Activated T-helper 1 cell treated with anti-CD3 and anti-CD28 coated beads, Interleukin-12 subunit alpha, Interleukin-12 subunit beta, Interleukin-2, Interleukin-4 antibody, amounts not matched to agents 30 ng/mL and 10 ng/mL and 1 ng/mL, durations not matched to agents 14 hours and 24 hours and 36 hours (primary cell): ENCODE measurements at regions of chr5 and their contacts with region 1.

Region 1: GRCh38 chr5:43008369-43009153 is 31.6 kb downstream of the ANXA2R start:
- DNase-seq: peak; percentile 86
- H3K4me3 Mint-ChIP-seq: peak overlapping the region; percentile 90
- H3K27ac Mint-ChIP-seq: peak overlapping the region; percentile 96
- H3K4me1 Mint-ChIP-seq: peaks cover 41% of the 10 kb centered on the region
- H3K27me3 Mint-ChIP-seq: no peaks in the 10 kb centered on the region

Region 2: DNA sequence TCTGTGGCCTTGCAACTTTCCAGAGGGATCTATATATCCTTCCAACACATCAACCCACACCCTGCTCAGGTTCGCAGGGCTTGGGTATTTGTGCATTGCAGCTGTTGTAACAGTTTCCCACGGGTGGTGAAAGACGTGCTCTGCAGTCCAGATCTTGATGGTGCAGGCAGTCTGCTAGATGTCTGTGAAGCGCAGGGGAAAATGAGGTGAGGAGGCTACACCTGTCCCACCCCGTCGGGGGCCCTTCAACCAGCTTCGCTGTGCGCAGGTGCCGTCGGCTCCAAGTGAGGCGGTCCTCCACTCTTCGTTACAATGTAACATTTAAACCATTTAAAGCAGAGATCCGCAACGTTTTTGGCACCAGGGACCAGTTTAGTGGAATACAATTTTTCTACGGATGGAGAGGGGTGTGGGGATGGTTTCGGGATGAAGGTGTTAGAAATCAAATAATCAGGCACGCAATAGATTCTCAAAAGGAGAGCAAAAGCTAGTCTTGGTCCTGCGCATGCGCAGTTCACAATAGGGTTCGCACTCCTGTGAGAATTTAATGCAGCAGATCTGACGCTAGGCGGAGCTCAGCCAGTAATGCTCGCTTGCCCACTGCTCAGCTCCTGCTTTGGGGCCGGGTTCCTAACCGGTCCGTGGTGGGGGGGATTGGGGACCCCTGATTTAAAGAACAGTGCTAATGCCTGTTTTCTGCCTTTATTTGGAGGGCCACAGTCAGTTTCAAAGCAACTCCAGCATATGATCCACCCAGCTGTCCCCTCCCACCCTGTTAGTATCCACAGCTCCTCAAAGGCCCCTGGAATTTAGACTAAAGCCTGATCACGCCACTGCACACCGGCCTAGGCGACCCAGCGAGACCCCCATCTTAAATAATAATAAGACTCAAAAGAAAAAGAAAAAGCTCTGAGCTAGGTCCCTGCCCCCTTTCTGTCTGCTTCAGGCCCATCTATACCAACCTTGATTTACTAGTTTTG is 99.8 kb before region 1 on chr5:
- intact Hi-C with region 1: loop called (anchors 1 kb)
- DNase-seq: peak; percentile 84
- H3K4me3 Mint-ChIP-seq: peak overlapping the region; percentile 81
- H3K27ac Mint-ChIP-seq: peak overlapping the region; percentile 50
- H3K4me1 Mint-ChIP-seq: peaks cover 12% of the 10 kb centered on the region
- H3K27me3 Mint-ChIP-seq: peaks cover 26% of the 10 kb centered on the region

Region 3: GRCh38 chr5:42994246-42995151 is 14.1 kb before region 1 on chr5:
- intact Hi-C with region 1: loop called (anchors 1 kb)
- DNase-seq: peak; percentile 84
- H3K4me3 Mint-ChIP-seq: peak overlapping the region; percentile 98
- H3K27ac Mint-ChIP-seq: peak overlapping the region; percentile 100
- H3K4me1 Mint-ChIP-seq: peaks cover 60% of the 10 kb centered on the region
- H3K27me3 Mint-ChIP-seq: peaks cover 3% of the 10 kb centered on the region

Region 4: DNA sequence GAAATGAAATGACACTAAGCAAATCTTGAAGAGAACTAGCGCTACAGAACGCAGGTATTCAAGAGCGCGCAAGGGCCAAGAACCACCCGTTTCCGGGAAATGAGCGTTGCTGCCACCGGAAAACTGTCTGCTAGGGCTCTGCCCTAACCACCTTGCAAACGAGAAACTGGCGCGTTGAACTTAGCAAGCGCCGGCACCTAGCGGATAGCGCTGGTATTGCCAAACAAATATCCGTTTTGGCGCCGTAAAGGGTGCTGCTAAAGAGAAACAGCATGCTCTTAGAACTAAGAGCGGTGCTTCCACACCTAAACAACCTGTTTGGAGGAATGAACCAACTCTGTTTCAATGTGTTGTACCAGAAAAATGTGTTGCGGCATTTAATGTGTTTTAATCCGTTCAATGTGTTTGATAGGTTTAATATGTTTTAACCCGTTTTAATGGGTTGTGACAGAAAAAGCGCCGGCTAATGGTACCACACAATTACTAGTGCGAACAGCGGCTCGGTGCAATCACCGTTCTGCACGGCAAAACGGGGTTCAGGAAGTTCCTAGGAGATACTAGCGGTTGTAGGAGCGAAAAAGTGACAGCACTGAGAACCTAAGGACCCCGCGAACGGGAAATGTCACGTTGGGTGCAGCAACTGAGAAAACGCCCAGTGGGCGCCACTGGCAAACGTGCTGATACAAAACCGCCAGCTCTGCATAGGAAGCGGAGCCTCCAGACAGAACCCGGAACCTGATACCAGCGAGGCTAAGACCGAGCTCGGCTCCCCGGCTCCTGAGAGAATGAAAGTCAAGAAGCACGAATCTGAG is 31.9 kb after region 1 on chr5 and contains the start of gene ANXA2R:
- intact Hi-C with region 1: loop called (anchors 1 kb)
- DNase-seq: peak; percentile 93
- H3K4me3 Mint-ChIP-seq: peak within 1 kb of the TSS; percentile 82
- H3K27ac Mint-ChIP-seq: peak within 1 kb of the TSS; percentile 86
- H3K4me1 Mint-ChIP-seq: peaks cover 59% of the 10 kb centered on the region
- H3K27me3 Mint-ChIP-seq: no peaks in the 10 kb centered on the region
- total RNA-seq, gene ANXA2R: 0.88 and 0.93 TPM in 2 replicates

Region 5: GRCh38 chr5:43320846-43321245 is 312.3 kb after region 1 on chr5:
- intact Hi-C with region 1: no loop called
- DNase-seq: no peak
- H3K4me3 Mint-ChIP-seq: no peak overlapping the region
- H3K27ac Mint-ChIP-seq: no peak overlapping the region
- H3K4me1 Mint-ChIP-seq: peaks cover 6% of the 10 kb centered on the region
- H3K27me3 Mint-ChIP-seq: peaks cover 1% of the 10 kb centered on the region

Region 6: GRCh38 chr5:43556857-43557542 is 548.4 kb after region 1 on chr5 and contains the start of gene PAIP1:
- intact Hi-C with region 1: loop called (anchors 2 kb)
- DNase-seq: peak; percentile 83
- H3K4me3 Mint-ChIP-seq: peak within 1 kb of the TSS; percentile 92
- H3K27ac Mint-ChIP-seq: peak within 1 kb of the TSS; percentile 93
- H3K4me1 Mint-ChIP-seq: peaks cover 10% of the 10 kb centered on the region
- H3K27me3 Mint-ChIP-seq: no peaks in the 10 kb centered on the region
- total RNA-seq, gene PAIP1: 59.0 and 60.8 TPM in 2 replicates